ENCODE measurements at regions of chr4 and their contacts with region 1.

Region 1: GRCh38 chr4:7094916-7095315 is 27.1 kb upstream of the GRPEL1 start:
- DNase-seq: peak in 1 of 2 donors; percentile 79
- H3K4me3 ChIP-seq: no peak overlapping the region
- CTCF ChIP-seq: no peak
- POLR2A ChIP-seq: no peak

Region 2: GRCh38 chr4:5084911-5085475 is 2009.9 kb before region 1 on chr4:
- intact Hi-C with region 1: no loop called
- DNase-seq: no peak
- H3K4me3 ChIP-seq: no peak overlapping the region
- CTCF ChIP-seq: no peak
- POLR2A ChIP-seq: no peak

Region 3: DNA sequence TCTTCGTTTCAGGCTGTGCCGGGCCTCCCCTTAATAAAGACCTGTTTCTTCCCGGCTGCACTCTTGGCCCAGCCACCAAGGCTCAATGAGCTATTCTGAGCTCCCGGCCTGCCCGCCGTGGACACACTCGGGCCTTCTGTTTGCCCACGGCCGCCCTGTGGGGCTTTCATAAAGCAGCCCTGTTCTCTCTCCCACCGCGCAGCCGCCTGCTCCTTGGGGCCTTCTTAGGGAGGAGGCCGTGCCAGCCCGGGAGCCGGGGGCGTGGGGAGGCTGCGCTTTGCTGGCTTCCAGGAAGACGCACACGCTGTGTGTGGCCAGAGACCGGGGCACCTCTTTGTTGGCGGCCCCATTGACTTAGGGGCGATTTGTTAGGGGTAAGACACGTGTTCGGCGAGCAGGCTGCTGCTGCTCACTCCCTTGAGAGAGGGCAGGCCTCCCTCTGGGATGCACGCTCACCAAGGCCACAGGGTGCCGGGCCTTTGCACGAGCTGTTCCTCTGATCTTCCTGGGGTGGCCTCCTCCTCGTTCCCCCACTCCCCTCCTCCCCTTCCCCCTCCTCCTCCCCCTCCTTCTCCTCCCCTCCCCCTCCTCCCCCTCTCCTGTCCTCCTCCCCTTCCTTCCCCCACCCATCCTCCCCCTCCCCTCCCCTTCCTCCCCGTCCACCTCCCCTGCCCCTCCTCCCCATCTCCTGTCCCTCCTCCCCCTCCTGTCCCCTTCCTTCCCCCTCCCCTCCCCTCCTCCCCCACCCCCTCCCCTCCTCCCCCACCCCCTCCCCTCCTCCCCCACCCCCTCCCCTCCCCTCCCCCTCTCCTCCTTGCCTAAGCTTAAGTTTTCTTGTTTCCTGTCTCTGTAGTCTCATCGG is 367.6 kb before region 1 on chr4:
- intact Hi-C with region 1: loop called (anchors 5 kb)
- DNase-seq: no peak
- H3K4me3 ChIP-seq: no peak overlapping the region
- CTCF ChIP-seq: no peak
- POLR2A ChIP-seq: no peak

Region 4: DNA sequence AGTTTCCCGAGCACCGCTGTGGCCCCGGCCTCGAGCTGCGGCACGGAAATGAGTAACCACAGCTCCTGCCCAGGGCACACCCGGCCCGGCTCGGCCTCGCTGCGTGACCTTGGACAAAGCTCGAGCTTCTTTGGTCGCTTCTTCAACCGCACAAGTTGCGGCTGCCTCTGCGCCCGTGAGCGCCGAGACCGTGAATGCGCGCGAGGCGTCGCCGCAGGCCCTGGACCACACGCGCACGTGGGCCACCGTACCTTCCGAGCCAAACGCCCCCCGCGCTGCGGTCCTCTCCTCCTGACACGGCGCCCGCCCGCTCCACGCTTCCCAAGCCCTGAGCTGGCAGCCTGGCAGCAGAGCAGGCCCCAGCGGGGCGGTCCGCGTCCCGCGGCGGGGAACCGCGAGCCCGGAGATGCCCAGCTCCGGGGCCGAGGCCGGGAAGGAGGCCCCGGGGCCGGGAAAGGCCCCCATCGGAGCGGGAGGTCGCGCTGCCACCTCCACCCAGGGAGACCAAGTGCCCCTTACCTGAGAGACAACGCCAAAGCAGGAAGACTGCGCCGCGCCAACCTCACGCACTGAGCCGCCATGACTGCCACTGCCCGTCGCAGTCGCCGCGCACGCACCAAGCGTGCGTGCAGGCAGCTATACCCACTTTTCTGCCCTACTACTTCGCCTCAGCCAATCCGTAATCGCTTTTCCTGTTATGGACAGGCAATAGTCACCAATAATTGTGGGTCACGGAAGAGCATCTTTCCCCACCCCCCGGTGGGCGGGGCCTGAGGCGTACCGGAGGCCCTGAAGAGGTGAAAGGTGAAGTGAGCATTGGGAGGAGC is 27.3 kb before region 1 on chr4 and contains the start of gene GRPEL1:
- intact Hi-C with region 1: no loop called
- DNase-seq: peak; percentile 91 to 100
- H3K4me3 ChIP-seq: peak within 1 kb of the TSS; percentile 93
- CTCF ChIP-seq: no peak
- POLR2A ChIP-seq: peak in 1 of 2 donors; percentile 88
- total RNA-seq, gene GRPEL1: 20.8 to 24.0 (median 21.6) TPM

Measured in lower leg skin (tissue), 4 donors.